Posterior cingulate gyrus (tissue), 11 donors: ENCODE measurements at regions of chr1 and their contacts with region 1.

Region 1: GRCh38 chr1:1307908-1308755 is at the starts of genes ACAP3 and PUSL1:
- DNase-seq: peak; percentile 72 to 98 (median 86)

Region 2: DNA sequence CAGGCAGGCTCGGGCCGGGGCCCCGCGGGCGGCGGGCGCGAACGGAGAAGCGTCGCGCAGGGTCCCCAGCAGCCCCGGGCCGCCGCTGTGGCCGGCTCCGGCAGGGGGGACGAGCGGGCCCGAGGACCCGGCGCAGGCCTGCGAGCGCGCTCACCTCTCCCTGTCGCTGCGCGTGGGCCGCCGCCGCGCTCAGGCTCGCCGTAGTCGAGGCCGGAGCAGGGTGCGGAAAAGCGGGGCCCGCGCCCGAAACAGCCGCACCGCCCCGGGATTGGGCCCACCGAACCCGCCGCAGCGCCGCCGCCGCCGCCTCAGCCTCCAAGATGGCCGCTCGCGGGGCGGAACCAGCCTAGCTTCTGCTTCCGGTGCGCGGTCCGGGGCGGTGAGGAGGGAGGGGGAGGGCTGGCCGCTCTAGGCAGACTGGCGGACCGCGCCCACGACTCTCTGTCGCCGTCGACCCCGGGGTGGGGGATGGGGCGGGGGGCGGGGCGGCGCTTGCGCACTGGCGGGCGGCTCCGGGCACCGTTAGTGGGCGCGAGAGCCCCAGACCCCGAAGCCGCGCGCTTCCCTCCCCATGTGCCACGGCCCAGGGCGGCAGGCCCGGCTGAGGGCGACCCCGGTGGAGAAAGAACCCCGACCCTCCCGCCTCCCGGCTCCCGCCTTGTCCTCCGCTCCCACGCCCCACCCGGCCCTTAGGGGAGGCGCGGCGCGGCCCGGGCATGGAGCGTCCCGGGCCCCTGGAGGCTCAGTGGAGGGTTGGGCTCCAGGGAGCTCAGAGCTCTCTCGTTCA is 34.4 kb before region 1 on chr1 and contains the start of gene UBE2J2:
- intact Hi-C with region 1: loop called (anchors 5 kb)
- DNase-seq: peak; percentile 88 to 99 (median 94)

Region 3: GRCh38 chr1:1324521-1325287 is 16.6 kb after region 1 on chr1 and contains the starts of genes CPTP and INTS11:
- intact Hi-C with region 1: loop called (anchors 2 kb)
- DNase-seq: peak; percentile 89 to 98 (median 93)

Region 4: GRCh38 chr1:1349256-1350012 is 41.3 kb after region 1 on chr1 and contains the start of gene DVL1:
- intact Hi-C with region 1: loop called (anchors 1 kb)
- DNase-seq: peak in 8 of 10 donors; percentile 41 to 94 (median 50)